Colonic mucosa (tissue), 4 donors: ENCODE measurements at regions of chr10 and their contacts with region 1.

Region 1: DNA sequence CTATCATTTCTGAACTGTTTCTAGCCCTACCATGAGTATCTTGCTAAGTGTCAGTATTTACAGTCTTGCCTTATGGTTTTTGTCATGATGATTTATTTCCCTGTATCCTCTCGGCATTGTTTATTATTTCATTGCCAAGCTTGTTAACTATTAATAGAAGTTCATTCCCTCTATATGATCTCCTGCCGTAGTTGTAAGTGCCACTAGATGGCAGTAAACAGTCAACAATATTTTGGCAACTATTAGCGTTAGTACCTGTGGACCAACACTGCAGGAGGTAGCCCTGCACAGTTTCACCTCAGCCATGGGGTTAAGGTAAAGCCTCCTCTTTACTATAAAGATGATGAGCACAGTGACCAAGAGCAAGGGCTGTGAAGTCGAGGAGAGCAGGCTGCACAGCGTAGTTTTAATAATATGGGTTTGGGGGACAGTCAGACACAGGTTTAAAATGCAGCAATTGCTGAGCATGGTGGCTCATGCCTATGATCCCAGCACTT is 26.1 kb upstream of the CCNJ start:
- DNase-seq: peak; percentile 61
- H3K4me3 ChIP-seq: no peak overlapping the region
- H3K27ac ChIP-seq: no peak overlapping the region
- H3K4me1 ChIP-seq: no peaks in the 10 kb centered on the region
- H3K27me3 ChIP-seq: no peaks in the 10 kb centered on the region
- CTCF ChIP-seq: peak; percentile 65

Region 2: DNA sequence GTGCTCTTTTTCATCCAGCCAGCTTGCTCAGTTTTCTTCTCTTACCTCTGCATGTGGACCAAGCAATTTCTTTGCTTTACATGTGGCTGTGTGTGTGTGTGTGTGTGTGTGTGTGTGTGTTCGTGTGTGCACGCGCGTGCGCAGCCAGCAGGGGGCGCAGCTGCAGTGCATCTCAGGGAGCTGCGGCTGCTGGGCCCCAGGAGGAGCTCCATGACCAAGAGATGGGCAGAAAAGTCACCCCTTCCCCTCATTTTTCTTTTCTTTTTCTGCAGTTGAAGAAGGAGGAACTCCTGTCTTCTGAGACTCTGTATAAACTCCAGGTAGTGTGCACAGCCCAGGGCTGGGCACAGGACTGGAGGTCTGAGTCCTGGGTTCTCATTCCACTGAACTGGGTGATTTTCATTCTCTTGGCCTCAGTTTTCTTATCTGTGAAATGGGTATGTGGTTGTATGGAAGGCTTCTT is 212.4 kb after region 1 on chr10:
- intact Hi-C with region 1: loop called (anchors 10 kb)
- DNase-seq: peak; percentile 89
- H3K4me3 ChIP-seq: no peak overlapping the region
- H3K27ac ChIP-seq: peak overlapping the region; percentile 29
- H3K4me1 ChIP-seq: no peaks in the 10 kb centered on the region
- H3K27me3 ChIP-seq: no peaks in the 10 kb centered on the region
- CTCF ChIP-seq: peak; percentile 52

Region 3: GRCh38 chr10:96292971-96293920 is 276.0 kb after region 1 on chr10:
- intact Hi-C with region 1: loop called (anchors 5 kb)
- DNase-seq: peak; percentile 43
- H3K4me3 ChIP-seq: no peak overlapping the region
- H3K27ac ChIP-seq: no peak overlapping the region
- H3K4me1 ChIP-seq: no peaks in the 10 kb centered on the region
- H3K27me3 ChIP-seq: no peaks in the 10 kb centered on the region
- CTCF ChIP-seq: peak; percentile 57

Region 4: GRCh38 chr10:96339957-96340904 is 323.0 kb after region 1 on chr10:
- intact Hi-C with region 1: loop called (anchors 10 kb)
- DNase-seq: peak; percentile 62
- H3K4me3 ChIP-seq: no peak overlapping the region
- H3K27ac ChIP-seq: no peak overlapping the region
- H3K4me1 ChIP-seq: no peaks in the 10 kb centered on the region
- H3K27me3 ChIP-seq: no peaks in the 10 kb centered on the region
- CTCF ChIP-seq: peak; percentile 83